ENCODE measurements at regions of chr1 and their contacts with region 1.

Region 1: GRCh38 chr1:28359592-28360239 is 9.8 kb upstream of the PHACTR4 start:
- DNase-seq: peak; percentile 62 to 78
- ATAC-seq: peak in 3 of 4 donors; percentile 51 to 69 (median 58)
- H3K4me3 ChIP-seq: no peak overlapping the region
- H3K27ac ChIP-seq: no peak overlapping the region
- H3K4me1 ChIP-seq: no peaks in the 10 kb centered on the region
- H3K27me3 ChIP-seq: no peaks in the 10 kb centered on the region
- CTCF ChIP-seq: peak; percentile 71

Region 2: GRCh38 chr1:28602536-28603439 is 243.1 kb after region 1 on chr1:
- intact Hi-C with region 1: loop called in 1 of 2 experiments (anchors 5 kb)
- DNase-seq: no peak
- ATAC-seq: peak in 1 of 4 donors; percentile 75
- H3K4me3 ChIP-seq: no peak overlapping the region
- H3K27ac ChIP-seq: no peak overlapping the region
- H3K4me1 ChIP-seq: peaks cover 13% of the 10 kb centered on the region
- H3K27me3 ChIP-seq: no peaks in the 10 kb centered on the region
- CTCF ChIP-seq: peak; percentile 57